ENCODE measurements at regions of chr19 and their contacts with region 1.

Region 1: DNA sequence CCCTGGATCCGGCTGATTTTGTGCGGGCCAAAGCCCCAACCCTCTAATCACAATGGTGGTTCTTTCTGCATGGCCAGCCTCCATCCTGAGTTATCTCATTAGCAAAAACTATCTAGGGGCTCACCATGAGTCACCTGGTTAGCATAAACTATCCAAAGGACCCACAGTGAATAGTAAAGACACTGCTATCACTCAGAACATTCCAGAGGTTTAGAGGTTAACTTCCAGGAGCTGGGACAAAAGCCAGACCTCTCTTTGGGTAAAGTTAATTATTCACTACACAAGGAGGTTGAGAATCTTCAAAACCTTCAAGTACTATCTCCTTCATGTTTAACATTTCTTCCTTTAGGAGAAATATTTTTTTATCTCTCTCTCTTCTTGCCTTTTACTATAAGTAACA is 18.8 kb upstream of the PPP5C start:
- DNase-seq: no peak
- ATAC-seq: no peak
- H3K4me3 ChIP-seq: no peak overlapping the region
- H3K4me3 Mint-ChIP-seq: no peak overlapping the region
- H3K27ac ChIP-seq: no peak overlapping the region
- H3K27ac Mint-ChIP-seq: no peak overlapping the region
- H3K4me1 ChIP-seq: no peaks in the 10 kb centered on the region
- H3K4me1 Mint-ChIP-seq: no peaks in the 10 kb centered on the region
- H3K27me3 ChIP-seq: no peaks in the 10 kb centered on the region
- H3K27me3 Mint-ChIP-seq: no peaks in the 10 kb centered on the region
- CTCF ChIP-seq: no peak

Region 2: GRCh38 chr19:46271481-46272197 is 56.4 kb before region 1 on chr19:
- CTCF ChIA-PET with region 1: no interaction called
- POLR2A ChIA-PET with region 1: no interaction called
- intact Hi-C with region 1: no loop called
- DNase-seq: no peak
- ATAC-seq: no peak
- H3K4me3 ChIP-seq: no peak overlapping the region
- H3K4me3 Mint-ChIP-seq: no peak overlapping the region
- H3K27ac ChIP-seq: no peak overlapping the region
- H3K27ac Mint-ChIP-seq: no peak overlapping the region
- H3K4me1 ChIP-seq: no peaks in the 10 kb centered on the region
- H3K4me1 Mint-ChIP-seq: no peaks in the 10 kb centered on the region
- H3K27me3 ChIP-seq: peaks cover 13 to 25% of the 10 kb centered on the region in 2 experiments
- H3K27me3 Mint-ChIP-seq: peaks cover 51% of the 10 kb centered on the region
- CTCF ChIP-seq: no peak

Region 3: DNA sequence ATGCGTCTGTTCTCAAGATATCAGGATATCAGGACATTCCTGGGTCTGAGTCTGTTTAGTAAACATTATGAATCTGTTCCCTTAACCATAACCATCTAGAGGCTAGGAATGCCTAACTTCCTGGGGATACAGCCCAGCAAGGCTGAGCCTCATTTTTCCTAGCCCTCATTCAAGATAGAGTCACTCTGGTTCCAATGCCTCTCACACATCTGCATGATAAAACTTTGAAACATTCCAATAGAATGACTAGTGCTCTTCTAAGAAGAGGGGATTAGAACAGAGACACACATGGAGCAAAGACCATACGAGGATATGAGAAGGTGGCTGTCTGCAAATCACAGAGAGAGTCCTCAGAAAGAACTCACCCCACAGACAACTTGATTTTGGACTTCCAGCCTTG is 1736.4 kb after region 1 on chr19:
- CTCF ChIA-PET with region 1: no interaction called
- POLR2A ChIA-PET with region 1: no interaction called
- intact Hi-C with region 1: loop called in 1 of 2 experiments (anchors 5 kb)
- DNase-seq: no peak
- ATAC-seq: no peak
- H3K4me3 ChIP-seq: no peak overlapping the region
- H3K4me3 Mint-ChIP-seq: no peak overlapping the region
- H3K27ac ChIP-seq: no peak overlapping the region
- H3K27ac Mint-ChIP-seq: no peak overlapping the region
- H3K4me1 ChIP-seq: no peaks in the 10 kb centered on the region
- H3K4me1 Mint-ChIP-seq: no peaks in the 10 kb centered on the region
- H3K27me3 ChIP-seq: peaks cover 0 to 12% of the 10 kb centered on the region in 2 experiments
- H3K27me3 Mint-ChIP-seq: no peaks in the 10 kb centered on the region
- CTCF ChIP-seq: no peak